HepG2 (cell line): ENCODE measurements at regions of chr1 and their contacts with region 1.

Region 1: GRCh38 chr1:212920896-212921295 is 29.4 kb upstream of the VASH2 start:
- DNase-seq: no peak
- ATAC-seq: no peak
- H3K4me3 ChIP-seq: no peak overlapping the region
- H3K27ac ChIP-seq: no peak overlapping the region
- H3K4me1 ChIP-seq: peaks cover 30% of the 10 kb centered on the region
- H3K27me3 ChIP-seq: peaks cover 0 to 16% of the 10 kb centered on the region in 2 experiments; a peak in 1 of 5 replicates
- CTCF ChIP-seq: peak; percentile 50
- EP300 ChIP-seq: no peak
- POLR2A ChIP-seq: no peak
- RAD21 ChIP-seq: peak; percentile 40; the same call in 1 of the 2 replicates

Region 2: DNA sequence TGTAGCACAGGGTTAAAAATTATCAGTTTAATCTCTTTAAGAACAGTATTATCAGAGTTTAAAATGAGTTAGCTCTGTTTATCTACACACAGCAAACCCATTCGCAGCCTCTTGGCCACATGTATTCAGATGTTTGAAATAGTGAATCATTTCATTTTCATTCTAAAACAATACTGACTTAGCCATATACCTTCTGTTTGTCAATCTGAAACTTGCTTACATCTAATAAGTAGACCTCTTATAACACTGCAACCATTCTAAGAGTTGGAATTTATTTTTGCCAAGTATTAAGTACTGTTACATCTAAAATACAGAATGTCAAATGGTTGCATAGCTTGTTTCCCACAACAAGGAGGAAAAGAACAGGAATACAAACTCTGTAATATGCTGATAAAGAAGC is 69.4 kb after region 1 on chr1:
- CTCF ChIA-PET with region 1: no interaction called
- POLR2A ChIA-PET with region 1: no interaction called
- in situ Hi-C with region 1: no loop called
- intact Hi-C with region 1: loop called (anchors 1 kb)
- DNase-seq: no peak
- ATAC-seq: no peak
- H3K4me3 ChIP-seq: no peak overlapping the region
- H3K27ac ChIP-seq: no peak overlapping the region
- H3K4me1 ChIP-seq: peaks cover 7% of the 10 kb centered on the region; the same call in 1 of the 2 replicates
- H3K27me3 ChIP-seq: no peaks in the 10 kb centered on the region
- CTCF ChIP-seq: no peak
- EP300 ChIP-seq: no peak
- POLR2A ChIP-seq: no peak
- RAD21 ChIP-seq: no peak